ENCODE measurements at regions of chr3 and their contacts with region 1.

Region 1: DNA sequence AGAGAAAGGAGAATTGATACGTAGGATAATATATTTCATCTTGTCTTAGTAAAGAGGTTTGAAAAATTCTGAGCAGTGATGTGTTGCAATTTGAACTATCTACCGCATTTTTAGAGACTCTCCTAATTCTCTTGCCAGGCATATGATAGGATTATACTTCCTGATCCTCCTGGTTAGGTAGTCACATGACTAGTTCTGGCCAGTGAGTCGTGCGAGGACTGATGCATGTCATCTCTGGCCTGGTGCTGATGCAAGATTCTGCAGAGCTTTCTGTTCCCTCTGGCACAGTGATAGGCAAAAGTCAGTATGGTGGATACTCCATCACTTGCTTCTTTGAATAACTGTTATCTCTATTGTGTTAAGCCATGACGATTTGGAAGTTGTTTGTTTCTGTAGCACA is 277.6 kb upstream of the NAALADL2 start:
- DNase-seq: no peak
- H3K4me3 ChIP-seq: no peak overlapping the region
- H3K27ac ChIP-seq: no peak overlapping the region
- H3K4me1 ChIP-seq: no peaks in the 10 kb centered on the region
- H3K27me3 ChIP-seq: no peaks in the 10 kb centered on the region
- CTCF ChIP-seq: no peak
- POLR2A ChIP-seq: no peak

Region 2: DNA sequence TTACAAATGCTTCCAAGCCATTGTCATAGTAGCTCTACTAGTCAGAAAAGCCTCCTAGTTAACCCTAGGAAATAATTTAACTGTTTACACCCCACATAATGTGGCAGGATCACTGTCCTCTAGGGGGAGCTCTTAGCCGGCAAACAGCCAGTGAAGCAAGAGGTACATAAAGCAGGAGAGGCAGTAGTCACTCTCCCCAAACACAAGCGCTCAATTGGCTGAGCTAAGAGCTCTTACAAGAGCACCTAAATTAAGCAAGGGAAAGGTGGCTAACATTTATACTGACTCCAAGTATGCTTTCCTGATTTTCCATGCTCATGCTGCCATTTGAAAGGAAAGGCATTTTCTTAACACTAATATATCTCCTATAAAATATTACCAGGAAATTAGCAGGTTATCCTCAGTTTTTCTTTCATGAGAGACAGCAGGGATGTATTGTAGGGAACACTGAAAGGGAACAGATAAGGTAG is 1908.3 kb before region 1 on chr3:
- intact Hi-C with region 1: loop called (anchors 10 kb)
- DNase-seq: no peak
- H3K4me3 ChIP-seq: no peak overlapping the region
- H3K27ac ChIP-seq: no peak overlapping the region
- H3K4me1 ChIP-seq: no peaks in the 10 kb centered on the region
- H3K27me3 ChIP-seq: no peaks in the 10 kb centered on the region
- CTCF ChIP-seq: peak in 2 of 3 donors; percentile 38 to 49
- POLR2A ChIP-seq: no peak